ENCODE measurements at regions of chr1 and their contacts with region 1.

Region 1: DNA sequence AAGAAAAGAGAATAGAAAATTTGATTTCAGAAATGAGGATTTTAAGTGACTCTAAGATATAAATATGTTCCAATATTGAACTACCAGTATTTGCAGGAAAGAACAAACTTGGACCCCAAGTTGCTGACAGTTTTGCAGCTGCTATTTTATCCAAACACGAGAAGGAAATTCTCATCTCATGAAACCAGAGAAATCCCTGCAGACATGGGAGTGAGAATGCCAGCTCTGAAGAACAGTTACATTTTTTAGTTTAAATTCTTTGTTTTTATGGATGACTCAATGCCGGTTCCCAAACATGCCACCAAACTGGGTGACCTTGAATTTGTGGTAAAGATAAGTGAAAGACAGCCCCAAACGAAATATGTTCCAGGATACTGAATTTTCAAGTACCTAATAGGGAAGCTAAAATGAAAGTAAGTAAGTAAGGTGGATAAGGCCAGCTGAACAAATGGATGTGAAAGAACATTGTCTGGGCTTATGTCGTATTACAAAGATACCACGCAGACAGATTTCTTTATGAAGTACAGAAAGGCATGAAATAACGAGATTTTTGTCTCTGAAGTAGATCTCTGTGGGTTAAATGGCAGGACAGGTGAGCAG is 19.9 kb downstream of the TLR5 start:
- DNase-seq: no peak
- ATAC-seq: no peak

Region 2: DNA sequence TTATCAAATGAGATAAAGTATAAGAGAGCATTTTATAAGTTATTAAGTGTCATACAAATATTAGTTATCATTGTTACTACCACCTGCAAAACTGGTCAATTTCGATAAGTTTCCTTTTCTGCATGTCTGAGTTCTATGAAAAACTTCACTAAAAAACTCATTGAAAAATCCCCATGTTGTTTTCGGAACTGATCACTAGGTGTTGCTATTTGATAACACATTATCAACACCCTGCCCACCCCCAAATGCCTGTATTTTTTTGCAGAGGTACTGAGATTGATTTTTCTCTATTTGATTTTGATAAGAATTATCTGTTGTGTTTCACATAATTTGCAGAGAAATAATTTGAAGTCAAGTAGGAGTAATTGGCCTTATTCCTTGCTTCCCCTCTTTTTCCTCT is 330.4 kb before region 1 on chr1:
- intact Hi-C with region 1: loop called in 1 of 2 experiments (anchors 5 kb)
- DNase-seq: no peak
- ATAC-seq: no peak